ENCODE measurements at regions of chr1 and their contacts with region 1.

Region 1: DNA sequence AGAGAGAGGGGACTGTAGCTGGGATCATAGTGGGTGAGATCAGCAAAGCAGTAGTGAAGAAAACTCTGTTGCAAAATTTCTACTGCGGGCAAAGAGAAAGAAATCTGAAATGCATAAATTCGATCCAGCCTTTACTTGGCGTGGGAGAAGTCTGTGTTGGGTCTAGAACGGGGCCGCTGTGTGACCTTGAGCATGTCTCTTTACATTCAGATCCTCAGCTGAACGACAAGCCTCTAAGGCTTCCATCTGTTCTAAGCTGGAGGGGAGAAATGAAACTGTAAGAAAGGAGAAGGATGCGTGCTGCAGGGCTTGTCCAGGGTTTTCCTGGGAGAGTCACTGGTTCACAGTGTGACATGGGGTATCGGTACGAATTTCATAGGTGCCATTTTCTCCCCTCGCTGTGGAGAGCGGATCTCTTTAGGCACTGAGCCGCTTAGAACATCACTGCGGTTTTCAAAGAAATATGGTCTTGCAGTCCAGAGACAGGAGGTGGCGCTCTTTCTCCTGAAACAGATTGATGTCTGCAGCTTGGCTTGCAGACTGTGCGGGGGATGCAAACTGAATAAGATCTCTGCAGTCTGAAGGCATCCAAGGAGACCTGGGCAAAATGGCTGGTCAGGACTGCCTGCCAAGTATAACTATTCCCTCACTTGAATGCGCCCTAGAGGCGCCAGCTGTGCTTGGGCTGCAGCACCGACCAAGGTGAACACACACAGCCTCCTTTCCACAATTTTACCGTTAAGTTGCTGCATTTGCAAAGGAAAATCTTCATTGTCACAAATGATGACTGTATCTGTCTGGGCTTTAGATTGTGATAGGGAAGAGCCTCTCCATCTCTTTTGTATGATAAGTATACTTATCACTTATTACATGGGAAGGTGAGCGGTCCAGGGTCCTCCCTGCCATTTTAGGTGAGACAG is 104.1 kb downstream of the XCL2 start:
- DNase-seq: peak; percentile 65 to 91 (median 74)
- ATAC-seq: peak; percentile 92
- H3K4me3 ChIP-seq: peak overlapping the region; percentile 19
- H3K4me3 Mint-ChIP-seq: peak overlapping the region; percentile 71
- H3K27ac ChIP-seq: no peak overlapping the region
- H3K27ac Mint-ChIP-seq: peak overlapping the region; percentile 10
- H3K4me1 ChIP-seq: peaks cover 36% of the 10 kb centered on the region
- H3K4me1 Mint-ChIP-seq: peaks cover 49% of the 10 kb centered on the region
- H3K27me3 ChIP-seq: no peaks in the 10 kb centered on the region
- H3K27me3 Mint-ChIP-seq: no peaks in the 10 kb centered on the region
- CTCF ChIP-seq: peak; percentile 82

Region 2: DNA sequence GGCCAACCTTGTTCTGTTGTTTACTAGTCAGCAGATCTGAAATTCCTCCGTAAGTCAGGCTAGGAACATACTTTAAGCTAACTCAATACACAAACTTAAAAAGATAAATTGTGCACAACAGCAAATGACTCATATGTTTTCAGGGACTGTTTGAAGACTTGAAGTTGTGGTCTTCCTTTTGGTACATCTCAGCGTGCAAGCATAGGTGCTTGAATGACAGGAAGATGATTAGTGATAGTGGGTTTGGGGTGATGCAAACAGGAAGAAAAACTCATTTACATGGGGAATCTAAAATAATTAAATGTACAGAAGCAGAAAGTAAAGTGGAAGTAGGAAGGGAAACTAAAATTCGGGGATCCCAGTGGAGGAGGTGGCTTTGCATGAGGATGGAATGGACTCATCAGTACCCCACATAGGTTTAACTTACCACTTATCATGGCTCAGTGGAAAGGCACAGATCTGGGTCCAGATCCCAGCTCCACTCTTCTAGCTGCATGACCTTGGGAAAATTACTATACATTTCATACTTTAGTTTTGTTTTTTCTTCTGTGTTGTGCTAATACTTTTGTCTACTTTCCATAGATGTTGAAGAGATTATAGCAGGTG is 18.2 kb before region 1 on chr1:
- CTCF ChIA-PET with region 1: interaction called, 12 read pairs
- POLR2A ChIA-PET with region 1: no interaction called
- intact Hi-C with region 1: no loop called
- DNase-seq: peak in 6 of 14 experiments; percentile 13 to 83 (median 42)
- ATAC-seq: peak; percentile 87
- H3K4me3 ChIP-seq: peak overlapping the region; percentile 11
- H3K4me3 Mint-ChIP-seq: peak overlapping the region; percentile 16
- H3K27ac ChIP-seq: peak overlapping the region in 1 of 2 donors; percentile 56
- H3K27ac Mint-ChIP-seq: peak overlapping the region; percentile 66
- H3K4me1 ChIP-seq: peaks cover 28% of the 10 kb centered on the region
- H3K4me1 Mint-ChIP-seq: peaks cover 17% of the 10 kb centered on the region
- H3K27me3 ChIP-seq: no peaks in the 10 kb centered on the region
- H3K27me3 Mint-ChIP-seq: no peaks in the 10 kb centered on the region
- CTCF ChIP-seq: no peak

Region 3: GRCh38 chr1:168427051-168427450 is 12.7 kb before region 1 on chr1:
- CTCF ChIA-PET with region 1: interaction called, 12 read pairs
- POLR2A ChIA-PET with region 1: interaction called, 3 read pairs
- intact Hi-C with region 1: no loop called
- DNase-seq: no peak
- ATAC-seq: no peak
- H3K4me3 ChIP-seq: no peak overlapping the region
- H3K4me3 Mint-ChIP-seq: no peak overlapping the region
- H3K27ac ChIP-seq: no peak overlapping the region
- H3K27ac Mint-ChIP-seq: no peak overlapping the region
- H3K4me1 ChIP-seq: peaks cover 11% of the 10 kb centered on the region
- H3K4me1 Mint-ChIP-seq: no peaks in the 10 kb centered on the region
- H3K27me3 ChIP-seq: no peaks in the 10 kb centered on the region
- H3K27me3 Mint-ChIP-seq: no peaks in the 10 kb centered on the region
- CTCF ChIP-seq: no peak

Region 4: DNA sequence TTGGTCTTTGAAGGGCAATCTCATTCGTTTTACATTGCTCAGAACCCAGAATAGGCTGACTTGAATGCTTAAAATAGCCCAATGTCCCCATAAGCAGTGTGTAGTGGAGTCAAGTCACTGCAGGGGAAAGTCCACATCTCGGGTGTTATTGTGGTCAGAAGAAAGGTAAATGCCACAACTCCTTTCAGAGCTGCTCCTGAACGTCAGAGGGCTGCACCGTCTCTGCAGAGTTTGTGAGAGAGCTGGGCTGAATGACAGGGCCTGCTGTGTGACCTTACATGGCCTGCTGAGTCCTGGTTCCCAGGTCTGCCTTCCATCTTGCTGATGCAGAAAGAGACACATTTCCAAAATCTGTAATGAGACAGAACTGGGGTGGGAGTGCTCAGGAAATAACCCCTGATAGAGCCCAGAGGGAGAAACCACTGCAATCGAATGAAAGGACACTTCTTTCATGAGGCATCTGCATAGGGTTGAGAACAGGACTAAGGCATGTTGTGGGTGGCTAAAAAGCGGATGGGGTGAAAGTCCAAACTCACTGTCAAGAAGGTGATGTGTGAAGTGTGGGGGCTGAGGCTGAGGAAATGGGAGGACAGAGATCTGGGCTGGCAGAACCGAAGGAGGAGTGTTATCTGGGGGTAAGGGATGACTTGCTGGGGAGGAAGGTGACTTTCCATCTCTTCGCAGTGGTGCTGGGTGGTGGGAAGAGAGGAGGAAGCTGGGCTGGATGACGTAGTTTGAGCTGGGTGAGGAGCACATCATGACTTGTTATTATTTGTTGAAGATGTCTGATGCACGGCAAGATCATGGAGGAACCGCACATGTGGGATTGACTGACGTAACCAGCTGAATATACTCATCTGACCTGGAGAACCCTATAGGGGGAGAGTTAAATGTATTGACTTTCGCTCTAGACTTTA is 70.4 kb after region 1 on chr1:
- CTCF ChIA-PET with region 1: no interaction called
- POLR2A ChIA-PET with region 1: no interaction called
- intact Hi-C with region 1: loop called in 1 of 2 experiments (anchors 10 kb)
- DNase-seq: peak in 3 of 14 experiments; percentile 41 to 65 (median 62)
- ATAC-seq: peak; percentile 32
- H3K4me3 ChIP-seq: no peak overlapping the region
- H3K4me3 Mint-ChIP-seq: no peak overlapping the region
- H3K27ac ChIP-seq: no peak overlapping the region
- H3K27ac Mint-ChIP-seq: no peak overlapping the region
- H3K4me1 ChIP-seq: peaks cover 37% of the 10 kb centered on the region
- H3K4me1 Mint-ChIP-seq: peaks cover 36% of the 10 kb centered on the region
- H3K27me3 ChIP-seq: no peaks in the 10 kb centered on the region
- H3K27me3 Mint-ChIP-seq: no peaks in the 10 kb centered on the region
- CTCF ChIP-seq: no peak

Region 5: GRCh38 chr1:168572633-168573032 is 132.9 kb after region 1 on chr1:
- CTCF ChIA-PET with region 1: interaction called, 7 read pairs
- POLR2A ChIA-PET with region 1: no interaction called
- intact Hi-C with region 1: loop called (anchors 1 kb)
- DNase-seq: no peak
- ATAC-seq: no peak
- H3K4me3 ChIP-seq: no peak overlapping the region
- H3K4me3 Mint-ChIP-seq: no peak overlapping the region
- H3K27ac ChIP-seq: no peak overlapping the region
- H3K27ac Mint-ChIP-seq: no peak overlapping the region
- H3K4me1 ChIP-seq: peaks cover 4% of the 10 kb centered on the region
- H3K4me1 Mint-ChIP-seq: peaks cover 11% of the 10 kb centered on the region
- H3K27me3 ChIP-seq: no peaks in the 10 kb centered on the region
- H3K27me3 Mint-ChIP-seq: no peaks in the 10 kb centered on the region
- CTCF ChIP-seq: no peak

Region 6: GRCh38 chr1:169106095-169106920 is 666.6 kb after region 1 on chr1 and contains the start of gene ATP1B1:
- CTCF ChIA-PET with region 1: no interaction called
- POLR2A ChIA-PET with region 1: no interaction called
- intact Hi-C with region 1: loop called in 1 of 2 experiments (anchors 10 kb)
- DNase-seq: peak; percentile 56 to 88 (median 72)
- ATAC-seq: peak; percentile 89
- H3K4me3 ChIP-seq: peak within 1 kb of the TSS; percentile 74
- H3K4me3 Mint-ChIP-seq: peak within 1 kb of the TSS; percentile 94
- H3K27ac ChIP-seq: no peak within 1 kb of the TSS
- H3K27ac Mint-ChIP-seq: peak within 1 kb of the TSS; percentile 5
- H3K4me1 ChIP-seq: peaks cover 36% of the 10 kb centered on the region
- H3K4me1 Mint-ChIP-seq: peaks cover 43% of the 10 kb centered on the region
- H3K27me3 ChIP-seq: no peaks in the 10 kb centered on the region
- H3K27me3 Mint-ChIP-seq: peaks cover 4% of the 10 kb centered on the region
- CTCF ChIP-seq: no peak
- total RNA-seq, gene ATP1B1: 3.5 to 4.5 TPM

Region 7: GRCh38 chr1:169348383-169349036 is 908.8 kb after region 1 on chr1:
- CTCF ChIA-PET with region 1: interaction called, 20 read pairs
- POLR2A ChIA-PET with region 1: interaction called, 4 read pairs
- intact Hi-C with region 1: loop called (anchors 1 to 2 kb)
- DNase-seq: peak in 4 of 14 experiments; percentile 38 to 79 (median 68)
- ATAC-seq: peak; percentile 46
- H3K4me3 ChIP-seq: no peak overlapping the region
- H3K4me3 Mint-ChIP-seq: no peak overlapping the region
- H3K27ac ChIP-seq: no peak overlapping the region
- H3K27ac Mint-ChIP-seq: no peak overlapping the region
- H3K4me1 ChIP-seq: no peaks in the 10 kb centered on the region
- H3K4me1 Mint-ChIP-seq: no peaks in the 10 kb centered on the region
- H3K27me3 ChIP-seq: no peaks in the 10 kb centered on the region
- H3K27me3 Mint-ChIP-seq: no peaks in the 10 kb centered on the region
- CTCF ChIP-seq: peak; percentile 92

Measured in CD4-positive, alpha-beta T cell (primary cell).